Right ventricle myocardium inferior (tissue), 1 donor: ENCODE measurements at regions of chr2 and their contacts with region 1.

Region 1: DNA sequence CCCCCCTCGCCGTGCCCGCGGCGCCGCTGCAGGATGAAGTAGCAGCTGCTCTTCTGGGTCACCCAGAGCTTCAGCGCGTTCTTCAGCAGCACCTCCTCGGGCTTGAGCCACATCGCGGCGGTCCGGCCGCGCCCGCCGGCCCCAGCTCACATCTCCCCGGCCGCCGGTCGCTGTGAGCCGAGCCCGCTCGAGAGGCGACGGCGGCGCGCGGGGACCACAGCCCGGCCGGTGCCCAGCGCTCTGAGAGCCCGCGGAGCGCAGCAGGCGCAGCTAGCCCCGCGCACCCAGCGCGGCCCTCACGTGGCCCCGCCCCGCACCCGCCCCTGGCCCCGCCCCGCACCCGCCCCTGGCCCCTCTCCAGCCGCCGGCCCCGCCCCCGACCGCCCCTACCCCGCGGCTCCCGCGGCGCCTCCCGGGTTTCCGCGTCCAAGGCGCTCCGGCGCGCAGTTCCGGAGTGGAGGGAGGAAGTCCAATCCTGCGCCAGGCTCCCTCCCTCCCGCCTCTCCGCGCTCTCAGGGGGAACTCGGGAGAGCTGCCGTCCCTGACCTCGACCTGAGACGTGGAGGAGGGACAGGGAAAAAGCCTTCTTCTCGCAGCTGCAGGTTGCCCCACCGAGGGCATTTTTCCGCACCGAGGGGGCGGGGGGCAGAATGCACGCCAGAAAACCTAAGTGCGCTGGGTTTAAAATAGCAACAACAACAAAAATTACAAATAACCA is at the start of gene TBC1D8:
- DNase-seq: peak; percentile 95
- ATAC-seq: peak; percentile 93
- total RNA-seq, gene TBC1D8: 37.9 TPM

Region 2: GRCh38 chr2:100562732-100563720 is 588.3 kb before region 1 on chr2 and contains the start of gene PDCL3:
- intact Hi-C with region 1: loop called (anchors 10 kb)
- DNase-seq: peak; percentile 98
- ATAC-seq: peak; percentile 98
- total RNA-seq, gene PDCL3: 29.2 TPM

Region 3: GRCh38 chr2:101012706-101013181 is 138.6 kb before region 1 on chr2:
- intact Hi-C with region 1: loop called (anchors 1 kb)
- DNase-seq: no peak
- ATAC-seq: no peak

Region 4: GRCh38 chr2:101064868-101065549 is 86.3 kb before region 1 on chr2:
- intact Hi-C with region 1: loop called (anchors 5 kb)
- DNase-seq: no peak
- ATAC-seq: peak; percentile 53

Region 5: GRCh38 chr2:101124643-101125366 is 26.5 kb before region 1 on chr2:
- intact Hi-C with region 1: loop called (anchors 2 kb)
- DNase-seq: peak; percentile 74
- ATAC-seq: peak; percentile 65